Psoas muscle (tissue), 8 donors: ENCODE measurements at regions of chr1 and their contacts with region 1.

Region 1: DNA sequence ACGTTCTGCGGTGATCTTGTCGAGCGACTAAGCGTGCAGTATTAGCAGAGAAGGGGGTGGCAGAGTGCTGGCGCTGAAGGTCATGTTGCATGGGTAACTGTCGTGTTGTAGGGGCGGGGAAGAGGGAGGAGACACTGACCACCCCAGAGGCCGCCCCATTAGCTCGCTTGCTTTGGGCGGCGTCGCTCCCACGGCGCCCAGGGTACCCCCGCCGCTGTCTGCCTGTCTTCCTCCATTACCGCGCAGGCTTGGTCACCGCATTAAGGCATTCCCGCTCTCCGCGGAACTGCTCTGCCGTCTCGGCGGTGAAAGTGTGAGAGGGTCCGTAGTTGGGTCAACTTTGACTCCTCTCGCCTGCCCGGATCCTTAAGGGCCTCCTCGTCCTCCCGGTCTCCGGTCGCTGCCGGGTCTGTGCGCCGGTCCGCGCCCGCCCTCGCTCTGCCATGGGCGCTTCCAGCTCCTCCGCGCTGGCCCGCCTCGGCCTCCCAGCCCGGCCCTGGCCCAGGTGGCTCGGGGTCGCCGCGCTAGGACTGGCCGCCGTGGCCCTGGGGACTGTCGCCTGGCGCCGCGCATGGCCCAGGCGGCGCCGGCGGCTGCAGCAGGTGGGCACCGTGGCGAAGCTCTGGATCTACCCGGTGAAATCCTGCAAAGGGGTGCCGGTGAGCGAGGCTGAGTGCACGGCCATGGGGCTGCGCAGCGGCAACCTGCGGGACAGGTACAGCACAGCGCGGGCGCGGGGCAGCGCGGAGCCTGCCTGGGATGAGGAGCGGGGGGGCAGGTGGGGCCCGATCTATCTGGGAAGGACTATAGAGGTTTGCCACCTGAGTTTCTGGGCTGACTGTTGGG is at the start of gene MTARC2:
- DNase-seq: peak; percentile 82 to 88
- ATAC-seq: peak; percentile 92 to 95 (median 94)
- H3K4me3 ChIP-seq: peak within 1 kb of the TSS; percentile 76
- H3K27ac ChIP-seq: peak within 1 kb of the TSS; percentile 84
- H3K4me1 ChIP-seq: peaks cover 42% of the 10 kb centered on the region
- H3K27me3 ChIP-seq: no peaks in the 10 kb centered on the region
- CTCF ChIP-seq: no peak
- total RNA-seq, gene MTARC2: 8.8 to 12.4 (median 9.5) TPM

Region 2: DNA sequence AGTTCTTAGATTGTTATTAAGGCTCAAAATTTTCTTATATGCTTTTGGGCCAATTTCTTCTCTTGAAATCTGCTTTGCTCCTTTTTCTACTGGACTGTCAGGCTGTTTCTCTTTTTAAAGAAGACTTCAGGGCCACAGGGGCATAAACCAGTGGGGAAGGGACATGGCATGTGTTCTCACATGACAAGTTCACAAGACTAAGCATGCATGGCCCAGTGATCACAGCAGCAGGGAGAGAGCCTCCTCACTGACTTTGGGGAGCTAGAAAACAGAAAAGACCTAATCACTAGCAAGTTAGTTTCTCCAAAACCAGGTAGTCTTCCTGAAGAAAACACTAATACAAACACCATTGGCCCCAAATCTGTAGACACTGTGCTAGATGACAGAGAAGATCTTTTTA is 540.9 kb before region 1 on chr1:
- intact Hi-C with region 1: loop called in 1 of 2 experiments (anchors 10 kb)
- DNase-seq: no peak
- ATAC-seq: no peak
- H3K4me3 ChIP-seq: no peak overlapping the region
- H3K27ac ChIP-seq: no peak overlapping the region
- H3K4me1 ChIP-seq: no peaks in the 10 kb centered on the region
- H3K27me3 ChIP-seq: no peaks in the 10 kb centered on the region
- CTCF ChIP-seq: no peak

Region 3: GRCh38 chr1:220300442-220301121 is 447.7 kb before region 1 on chr1:
- intact Hi-C with region 1: loop called in 1 of 2 experiments (anchors 5 kb)
- DNase-seq: peak; percentile 59 to 63
- ATAC-seq: peak; percentile 68 to 82 (median 76)
- H3K4me3 ChIP-seq: no peak overlapping the region
- H3K27ac ChIP-seq: peak overlapping the region; percentile 70
- H3K4me1 ChIP-seq: no peaks in the 10 kb centered on the region
- H3K27me3 ChIP-seq: no peaks in the 10 kb centered on the region
- CTCF ChIP-seq: no peak

Region 4: GRCh38 chr1:221125976-221126375 is 377.7 kb after region 1 on chr1:
- intact Hi-C with region 1: no loop called
- DNase-seq: no peak
- ATAC-seq: no peak
- H3K4me3 ChIP-seq: no peak overlapping the region
- H3K27ac ChIP-seq: no peak overlapping the region
- H3K4me1 ChIP-seq: no peaks in the 10 kb centered on the region
- H3K27me3 ChIP-seq: no peaks in the 10 kb centered on the region
- CTCF ChIP-seq: no peak